SK-N-SH (cell line): ENCODE measurements at regions of chr1 and their contacts with region 1.

Region 1: GRCh38 chr1:206030714-206031113 is 7.0 kb upstream of the CTSE start:
- DNase-seq: peak; percentile 59
- H3K4me3 ChIP-seq: peak overlapping the region in 1 of 2 experiments; percentile 8; a peak in 1 of 4 replicates
- H3K27ac ChIP-seq: no peak overlapping the region
- H3K4me1 ChIP-seq: peaks cover 0 to 2% of the 10 kb centered on the region in 2 experiments; a peak in 1 of 4 replicates
- H3K27me3 ChIP-seq: peaks cover 16% of the 10 kb centered on the region; the same call in 1 of the 2 replicates
- CTCF ChIP-seq: peak; percentile 82
- EP300 ChIP-seq: no peak
- RAD21 ChIP-seq: peak; percentile 82

Region 2: GRCh38 chr1:206012086-206012859 is 18.4 kb before region 1 on chr1:
- CTCF ChIA-PET with region 1: interaction called, 10 read pairs
- POLR2A ChIA-PET with region 1: no interaction called
- DNase-seq: no peak
- H3K4me3 ChIP-seq: no peak overlapping the region
- H3K27ac ChIP-seq: no peak overlapping the region
- H3K4me1 ChIP-seq: no peaks in the 10 kb centered on the region
- H3K27me3 ChIP-seq: peaks cover 14% of the 10 kb centered on the region; the same call in 1 of the 2 replicates
- CTCF ChIP-seq: no peak
- EP300 ChIP-seq: no peak
- RAD21 ChIP-seq: no peak

Region 3: GRCh38 chr1:206050655-206051235 is 20.0 kb after region 1 on chr1:
- CTCF ChIA-PET with region 1: interaction called, 18 read pairs
- POLR2A ChIA-PET with region 1: no interaction called
- DNase-seq: no peak
- H3K4me3 ChIP-seq: no peak overlapping the region
- H3K27ac ChIP-seq: no peak overlapping the region
- H3K4me1 ChIP-seq: no peaks in the 10 kb centered on the region
- H3K27me3 ChIP-seq: peaks cover 11% of the 10 kb centered on the region; the same call in 1 of the 2 replicates
- CTCF ChIP-seq: no peak
- EP300 ChIP-seq: no peak
- RAD21 ChIP-seq: no peak

Region 4: GRCh38 chr1:206094024-206094423 is 63.3 kb after region 1 on chr1:
- CTCF ChIA-PET with region 1: interaction called, 248 read pairs
- POLR2A ChIA-PET with region 1: no interaction called
- DNase-seq: no peak
- H3K4me3 ChIP-seq: no peak overlapping the region
- H3K27ac ChIP-seq: peak overlapping the region in 1 of 2 experiments; percentile 35; a peak in 2 of 4 replicates
- H3K4me1 ChIP-seq: peaks cover 0 to 5% of the 10 kb centered on the region in 2 experiments; a peak in 2 of 4 replicates
- H3K27me3 ChIP-seq: no peaks in the 10 kb centered on the region
- CTCF ChIP-seq: no peak
- EP300 ChIP-seq: peak in 1 of 2 experiments; percentile 72; a peak in 2 of 4 replicates
- RAD21 ChIP-seq: no peak

Region 5: DNA sequence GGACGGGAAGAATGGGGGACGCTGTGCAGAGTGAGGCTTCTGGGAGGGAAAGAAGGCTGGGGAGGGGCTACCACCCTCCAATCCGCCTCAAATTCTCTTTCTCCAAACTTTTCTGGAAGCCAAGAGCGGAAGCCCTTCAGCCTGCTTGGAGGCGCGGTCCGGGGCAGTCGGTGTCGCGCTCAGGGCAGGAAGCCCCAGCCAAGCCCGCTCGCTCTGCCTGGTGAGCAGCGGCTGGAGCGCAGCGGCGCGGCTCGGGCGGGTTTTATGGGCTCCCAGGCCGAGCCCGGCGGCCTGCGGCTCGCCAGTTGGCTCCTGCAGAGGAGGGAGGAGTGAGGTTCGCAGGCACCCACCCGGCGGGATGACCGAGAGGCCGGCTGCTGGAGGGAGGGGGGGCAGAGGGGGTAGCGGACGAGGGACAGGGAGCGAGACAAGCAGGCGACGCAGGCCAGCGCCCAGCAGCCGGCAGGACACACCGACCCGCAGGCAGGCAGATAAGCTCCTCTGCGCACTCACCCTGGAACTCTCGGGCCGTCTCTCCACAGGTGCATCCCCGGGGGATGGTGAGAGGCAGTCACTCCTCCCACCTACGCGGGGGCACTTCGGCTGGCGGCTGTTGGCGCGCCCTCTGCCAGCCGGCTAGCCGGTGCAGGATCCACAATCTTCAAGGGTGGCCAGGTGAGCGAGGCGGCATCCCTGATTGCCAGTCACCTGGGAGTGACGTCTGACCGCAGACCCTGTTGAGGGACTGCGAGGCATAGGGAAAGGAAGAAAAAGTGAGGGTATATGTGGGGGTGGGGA is 86.6 kb after region 1 on chr1 and contains the start of gene AVPR1B:
- CTCF ChIA-PET with region 1: interaction called, 16 read pairs
- POLR2A ChIA-PET with region 1: no interaction called
- DNase-seq: peak; percentile 87
- H3K4me3 ChIP-seq: peak within 1 kb of the TSS; percentile 41 to 57
- H3K27ac ChIP-seq: no peak within 1 kb of the TSS
- H3K4me1 ChIP-seq: peaks cover 0 to 10% of the 10 kb centered on the region in 2 experiments; a peak in 1 of 4 replicates
- H3K27me3 ChIP-seq: peaks cover 34% of the 10 kb centered on the region
- CTCF ChIP-seq: 0 out of 2 replicates have a peak, but pooled peaks have one; percentile 8
- EP300 ChIP-seq: no peak
- RAD21 ChIP-seq: no peak
- polyA plus RNA-seq, gene AVPR1B: not detected in 2 replicates

Region 6: GRCh38 chr1:206503591-206504362 is 473.1 kb after region 1 on chr1:
- CTCF ChIA-PET with region 1: no interaction called
- POLR2A ChIA-PET with region 1: no interaction called
- DNase-seq: no peak
- H3K4me3 ChIP-seq: no peak overlapping the region
- H3K27ac ChIP-seq: peak overlapping the region; percentile 39 to 82; a peak in 3 of 4 replicates
- H3K4me1 ChIP-seq: peaks cover 16 to 22% of the 10 kb centered on the region in 2 experiments; a peak in 3 of 4 replicates
- H3K27me3 ChIP-seq: no peaks in the 10 kb centered on the region
- CTCF ChIP-seq: no peak
- EP300 ChIP-seq: peak in 1 of 2 experiments; percentile 63; a peak in 2 of 4 replicates
- RAD21 ChIP-seq: no peak